ENCODE measurements at regions of chr3 and their contacts with region 1.

Region 1: DNA sequence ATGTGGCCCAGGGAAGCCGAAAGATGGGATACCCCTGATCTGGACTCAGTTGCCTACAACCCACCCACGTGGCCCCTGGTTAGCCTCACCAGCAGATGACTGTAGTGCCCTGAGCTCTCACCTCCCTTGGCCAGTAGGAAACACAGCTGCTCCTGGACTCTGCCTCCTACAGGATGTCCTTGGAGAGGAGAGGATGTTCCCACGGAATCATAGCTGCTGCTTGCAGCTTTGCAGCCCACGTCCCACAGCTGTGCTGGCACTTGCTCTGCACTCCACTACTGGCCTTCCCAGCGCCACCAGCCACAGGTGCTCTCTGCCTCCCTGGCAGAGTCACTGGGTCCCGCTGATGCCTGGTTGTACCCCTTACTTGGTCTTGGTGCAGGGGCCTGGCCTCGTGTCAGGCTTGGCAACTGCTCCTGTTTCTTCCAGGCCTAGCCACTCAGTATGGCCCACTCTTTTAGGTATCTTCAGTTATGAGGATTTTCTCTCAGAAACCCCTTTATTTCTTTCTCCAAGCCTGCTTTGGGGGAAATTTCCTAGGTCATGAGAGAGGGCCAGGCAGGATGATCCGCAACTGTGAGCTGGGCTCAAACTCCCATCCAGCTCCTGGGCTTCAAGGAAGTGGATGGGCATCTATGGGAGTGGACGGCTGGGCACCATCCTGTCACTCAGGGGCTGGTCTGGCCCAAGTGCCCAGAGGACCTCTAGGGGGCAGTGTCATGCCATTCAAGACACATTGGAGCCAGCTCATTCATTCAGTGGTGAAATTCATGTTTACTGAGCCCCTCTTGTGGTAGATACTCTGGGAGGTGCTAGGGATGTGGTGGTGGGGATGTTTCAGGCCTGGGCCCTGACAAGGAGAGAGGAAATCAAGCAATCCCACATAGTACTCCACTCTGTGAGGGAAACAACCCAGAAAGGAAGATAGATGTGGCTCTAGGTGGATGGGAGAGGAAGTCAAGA is 16.2 kb upstream of the VILL start:
- DNase-seq: peak; percentile 63
- H3K4me3 ChIP-seq: no peak overlapping the region
- H3K27ac ChIP-seq: no peak overlapping the region
- H3K4me1 ChIP-seq: no peaks in the 10 kb centered on the region
- H3K27me3 ChIP-seq: no peaks in the 10 kb centered on the region
- CTCF ChIP-seq: peak; percentile 86 to 95
- POLR2A ChIP-seq: no peak

Region 2: GRCh38 chr3:37922721-37923568 is 51.5 kb before region 1 on chr3:
- CTCF ChIA-PET with region 1: no interaction called
- POLR2A ChIA-PET with region 1: no interaction called
- dilution Hi-C with region 1: no loop called
- intact Hi-C with region 1: no loop called
- DNase-seq: no peak
- H3K4me3 ChIP-seq: no peak overlapping the region
- H3K27ac ChIP-seq: no peak overlapping the region
- H3K4me1 ChIP-seq: peaks cover 2% of the 10 kb centered on the region
- H3K27me3 ChIP-seq: no peaks in the 10 kb centered on the region
- CTCF ChIP-seq: no peak
- POLR2A ChIP-seq: no peak

Region 3: GRCh38 chr3:37986479-37987314 is 12.3 kb after region 1 on chr3:
- CTCF ChIA-PET with region 1: interaction called, 53 read pairs
- POLR2A ChIA-PET with region 1: no interaction called
- dilution Hi-C with region 1: no loop called
- intact Hi-C with region 1: no loop called
- DNase-seq: peak; percentile 39
- H3K4me3 ChIP-seq: no peak overlapping the region
- H3K27ac ChIP-seq: no peak overlapping the region
- H3K4me1 ChIP-seq: no peaks in the 10 kb centered on the region
- H3K27me3 ChIP-seq: no peaks in the 10 kb centered on the region
- CTCF ChIP-seq: no peak
- POLR2A ChIP-seq: no peak

Region 4: DNA sequence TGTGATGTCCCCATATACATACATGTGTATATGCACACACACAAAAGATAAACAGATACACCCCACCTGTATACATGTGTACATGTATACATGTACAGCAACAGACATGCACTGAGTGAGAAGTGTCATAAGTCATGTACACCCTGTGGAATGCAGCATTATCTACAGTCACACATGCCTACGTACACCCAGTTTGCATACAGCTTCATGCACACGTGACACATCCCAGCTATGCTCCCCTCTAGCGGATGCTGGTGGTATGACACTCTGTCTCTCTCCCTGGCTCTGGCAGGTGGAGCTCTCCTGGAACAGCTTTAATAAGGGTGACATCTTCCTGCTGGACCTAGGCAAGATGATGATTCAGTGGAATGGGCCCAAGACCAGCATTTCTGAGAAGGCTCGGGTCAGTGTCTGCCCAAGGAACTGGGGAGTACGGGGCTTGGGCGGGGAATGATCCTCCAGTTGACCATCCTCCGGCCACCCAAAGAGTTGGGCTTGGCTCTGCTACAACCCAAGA is 22.4 kb after region 1 on chr3:
- CTCF ChIA-PET with region 1: interaction called, 68 read pairs
- POLR2A ChIA-PET with region 1: no interaction called
- dilution Hi-C with region 1: no loop called
- intact Hi-C with region 1: loop called (anchors 1 kb)
- DNase-seq: peak; percentile 84
- H3K4me3 ChIP-seq: no peak overlapping the region
- H3K27ac ChIP-seq: no peak overlapping the region
- H3K4me1 ChIP-seq: peaks cover 15% of the 10 kb centered on the region
- H3K27me3 ChIP-seq: no peaks in the 10 kb centered on the region
- CTCF ChIP-seq: peak; percentile 90
- POLR2A ChIP-seq: no peak

Region 5: GRCh38 chr3:38004415-38005076 is 30.1 kb after region 1 on chr3:
- CTCF ChIA-PET with region 1: interaction called, 18 read pairs
- POLR2A ChIA-PET with region 1: no interaction called
- dilution Hi-C with region 1: no loop called
- intact Hi-C with region 1: loop called (anchors 1 kb)
- DNase-seq: peak; percentile 50
- H3K4me3 ChIP-seq: no peak overlapping the region
- H3K27ac ChIP-seq: no peak overlapping the region
- H3K4me1 ChIP-seq: no peaks in the 10 kb centered on the region
- H3K27me3 ChIP-seq: no peaks in the 10 kb centered on the region
- CTCF ChIP-seq: peak; percentile 50 to 72
- POLR2A ChIP-seq: no peak

Region 6: DNA sequence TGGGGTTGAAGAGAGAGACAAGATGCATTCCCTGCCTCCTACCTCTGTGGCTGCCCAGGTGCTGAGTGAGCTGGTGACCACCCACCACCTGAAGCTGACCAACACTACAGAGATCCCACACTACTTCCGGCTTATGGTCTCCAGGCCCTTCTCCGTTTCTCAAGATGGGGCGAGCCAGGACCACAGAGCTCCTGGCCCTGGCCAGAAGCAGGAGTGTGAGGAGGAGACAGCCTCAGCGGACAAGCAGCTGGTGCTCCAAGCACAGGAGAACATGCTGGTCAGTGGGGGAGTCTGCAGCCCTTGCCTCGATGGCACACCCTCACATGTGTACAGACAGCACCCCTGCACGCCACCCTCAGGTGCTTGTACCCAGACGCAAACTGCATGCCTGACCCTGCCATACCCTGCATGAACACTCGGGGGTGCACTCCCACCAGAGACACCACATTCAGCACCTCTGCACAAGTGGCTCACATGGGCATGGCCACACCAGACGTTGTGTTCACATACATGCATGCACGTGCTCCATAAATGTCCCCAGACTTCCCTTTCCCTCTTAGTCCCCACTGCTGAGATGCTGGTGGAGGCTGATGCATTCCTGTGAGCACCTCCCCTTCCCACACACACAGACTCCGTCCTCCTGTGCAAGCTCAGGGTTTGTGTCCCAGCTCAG is 143.5 kb after region 1 on chr3:
- CTCF ChIA-PET with region 1: interaction called, 9 read pairs
- POLR2A ChIA-PET with region 1: no interaction called
- dilution Hi-C with region 1: no loop called
- intact Hi-C with region 1: loop called (anchors 1 kb)
- DNase-seq: peak; percentile 63
- H3K4me3 ChIP-seq: no peak overlapping the region
- H3K27ac ChIP-seq: no peak overlapping the region
- H3K4me1 ChIP-seq: no peaks in the 10 kb centered on the region
- H3K27me3 ChIP-seq: no peaks in the 10 kb centered on the region
- CTCF ChIP-seq: peak; percentile 65 to 83
- POLR2A ChIP-seq: no peak